Sigmoid colon (tissue), 7 donors: ENCODE measurements at regions of chr1 and their contacts with region 1.

Region 1: GRCh38 chr1:112955781-112956543 is at the start of gene SLC16A1:
- DNase-seq: peak; percentile 97
- H3K4me3 ChIP-seq: peak within 1 kb of the TSS; percentile 70 to 81 (median 76)
- H3K27ac ChIP-seq: peak within 1 kb of the TSS; percentile 93 to 97 (median 96)
- H3K4me1 ChIP-seq: peaks cover 0 to 75% (median 50%) of the 10 kb centered on the region in 4 donors
- H3K27me3 ChIP-seq: no peaks in the 10 kb centered on the region
- CTCF ChIP-seq: peak in 3 of 4 experiments; percentile 11 to 22 (median 20)
- EP300 ChIP-seq: no peak
- POLR2A ChIP-seq: peak; percentile 76 to 84
- total RNA-seq, gene SLC16A1: 48.7 to 80.5 (median 68.4) TPM

Region 2: GRCh38 chr1:112882271-112882744 is 73.7 kb before region 1 on chr1:
- intact Hi-C with region 1: loop called (anchors 2 kb)
- DNase-seq: no peak
- H3K4me3 ChIP-seq: no peak overlapping the region
- H3K27ac ChIP-seq: no peak overlapping the region
- H3K4me1 ChIP-seq: no peaks in the 10 kb centered on the region
- H3K27me3 ChIP-seq: no peaks in the 10 kb centered on the region
- CTCF ChIP-seq: no peak
- EP300 ChIP-seq: no peak
- POLR2A ChIP-seq: no peak

Region 3: GRCh38 chr1:112998592-112999235 is 42.8 kb after region 1 on chr1:
- intact Hi-C with region 1: loop called (anchors 1 kb)
- DNase-seq: peak; percentile 91
- H3K4me3 ChIP-seq: peak overlapping the region in 2 of 4 donors; percentile 0 to 10
- H3K27ac ChIP-seq: peak overlapping the region; percentile 75 to 85 (median 85)
- H3K4me1 ChIP-seq: peaks cover 0 to 65% (median 48%) of the 10 kb centered on the region in 4 donors
- H3K27me3 ChIP-seq: no peaks in the 10 kb centered on the region
- CTCF ChIP-seq: no peak
- EP300 ChIP-seq: no peak
- POLR2A ChIP-seq: no peak

Region 4: GRCh38 chr1:113042285-113043143 is 86.6 kb after region 1 on chr1:
- intact Hi-C with region 1: loop called (anchors 5 kb)
- DNase-seq: peak; percentile 84
- H3K4me3 ChIP-seq: no peak overlapping the region
- H3K27ac ChIP-seq: peak overlapping the region in 1 of 4 donors; percentile 39
- H3K4me1 ChIP-seq: peaks cover 0 to 14% (median 10%) of the 10 kb centered on the region in 4 donors
- H3K27me3 ChIP-seq: no peaks in the 10 kb centered on the region
- CTCF ChIP-seq: peak; percentile 51 to 67 (median 60)
- EP300 ChIP-seq: no peak
- POLR2A ChIP-seq: no peak